Esophagus muscularis mucosa (tissue), 4 donors: ENCODE measurements at regions of chr10 and their contacts with region 1.

Region 1: GRCh38 chr10:109922976-109923921 is at the start of gene XPNPEP1:
- DNase-seq: no peak
- H3K4me3 ChIP-seq: peak within 1 kb of the TSS; percentile 93 to 98 (median 95)
- H3K27ac ChIP-seq: peak within 1 kb of the TSS; percentile 95 to 97 (median 96)
- H3K4me1 ChIP-seq: peaks cover 12 to 34% (median 28%) of the 10 kb centered on the region in 4 donors
- H3K27me3 ChIP-seq: no peaks in the 10 kb centered on the region
- CTCF ChIP-seq: no peak
- EP300 ChIP-seq: no peak
- POLR2A ChIP-seq: peak; percentile 61
- total RNA-seq, gene XPNPEP1: 43.2 to 61.9 (median 48.8) TPM

Region 2: DNA sequence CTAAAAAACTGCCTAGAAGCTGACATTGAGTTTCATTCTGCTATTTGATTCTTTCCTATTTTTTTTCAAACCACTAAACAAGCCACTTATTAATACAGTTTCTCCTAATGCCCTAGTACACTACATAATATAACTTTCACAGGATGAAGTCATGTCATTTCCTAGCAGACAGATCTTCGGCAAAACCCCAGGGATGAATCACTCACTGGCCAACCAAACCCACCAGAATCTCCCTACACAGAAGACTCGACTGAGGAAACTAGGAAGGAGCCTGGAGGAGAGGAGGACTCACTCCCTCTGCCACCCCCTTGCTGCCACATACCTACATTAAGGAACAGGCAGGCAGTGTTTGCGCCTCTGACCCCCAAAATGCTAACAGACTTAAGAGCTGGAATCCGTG is 33.4 kb before region 1 on chr10:
- intact Hi-C with region 1: loop called (anchors 5 kb)
- DNase-seq: no peak
- H3K4me3 ChIP-seq: no peak overlapping the region
- H3K27ac ChIP-seq: peak overlapping the region in 1 of 4 donors; percentile 29
- H3K4me1 ChIP-seq: peaks cover 37 to 50% (median 46%) of the 10 kb centered on the region in 4 donors
- H3K27me3 ChIP-seq: no peaks in the 10 kb centered on the region
- CTCF ChIP-seq: no peak
- EP300 ChIP-seq: no peak
- POLR2A ChIP-seq: no peak

Region 3: DNA sequence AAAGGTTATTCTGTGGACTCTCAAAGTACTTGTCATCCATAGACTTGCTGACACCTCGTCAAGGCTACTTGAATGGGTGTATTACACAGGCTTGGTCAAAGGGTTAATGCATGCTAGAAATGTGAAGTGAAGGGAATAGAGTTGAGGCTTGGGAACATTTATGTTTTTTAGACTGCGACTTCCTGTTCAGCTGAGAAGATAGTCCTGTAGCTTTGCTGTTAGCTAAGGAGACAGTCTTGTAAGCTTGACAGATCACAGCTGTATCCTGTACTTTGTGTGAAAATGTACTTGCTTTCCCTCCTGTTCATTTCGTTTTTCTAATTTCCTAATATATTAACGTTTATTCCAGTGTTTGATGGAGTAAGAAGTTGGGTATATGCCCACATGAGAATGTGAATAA is 136.7 kb after region 1 on chr10:
- intact Hi-C with region 1: no loop called
- DNase-seq: no peak
- H3K4me3 ChIP-seq: no peak overlapping the region
- H3K27ac ChIP-seq: peak overlapping the region in 1 of 4 donors; percentile 40
- H3K4me1 ChIP-seq: peaks cover 11 to 31% (median 30%) of the 10 kb centered on the region in 4 donors
- H3K27me3 ChIP-seq: no peaks in the 10 kb centered on the region
- CTCF ChIP-seq: no peak
- EP300 ChIP-seq: no peak
- POLR2A ChIP-seq: no peak

Region 4: DNA sequence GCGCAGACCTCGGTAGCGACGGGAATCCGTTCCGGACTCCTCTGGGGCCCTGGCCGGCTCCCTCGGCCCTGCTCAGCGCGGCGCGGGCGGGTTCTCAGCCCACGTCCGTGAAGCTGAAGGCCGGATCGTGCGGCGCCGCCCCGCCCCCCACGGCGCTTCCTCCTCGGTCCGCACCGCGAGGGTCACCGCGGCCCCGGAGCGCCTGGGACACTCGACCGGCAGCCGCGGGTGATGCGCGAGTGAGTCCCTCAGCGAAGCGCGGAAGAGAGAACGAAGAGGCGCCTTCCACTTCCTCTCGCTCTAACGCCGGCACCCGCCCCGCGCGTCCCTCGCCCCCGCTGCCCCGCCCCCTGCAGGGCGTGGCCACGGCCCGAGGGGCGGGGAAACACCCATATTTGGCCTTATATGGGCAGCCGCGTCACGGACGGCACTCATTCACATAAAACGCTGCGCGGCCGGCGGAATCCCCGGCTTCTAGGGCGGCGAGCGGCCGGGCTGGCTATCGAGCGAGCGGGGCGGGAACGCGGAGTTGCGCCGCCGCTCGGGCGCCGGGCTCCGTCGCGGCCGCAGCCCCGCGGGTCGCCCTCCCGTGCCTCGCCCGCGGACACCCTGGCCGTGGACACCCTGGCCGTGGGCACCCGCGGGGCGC is 574.3 kb after region 1 on chr10 and contains the start of gene DUSP5:
- intact Hi-C with region 1: no loop called
- DNase-seq: peak; percentile 99
- H3K4me3 ChIP-seq: peak within 1 kb of the TSS; percentile 68 to 83 (median 78)
- H3K27ac ChIP-seq: peak within 1 kb of the TSS; percentile 88 to 93 (median 92)
- H3K4me1 ChIP-seq: peaks cover 49 to 62% (median 60%) of the 10 kb centered on the region in 4 donors
- H3K27me3 ChIP-seq: no peaks in the 10 kb centered on the region
- CTCF ChIP-seq: no peak
- EP300 ChIP-seq: no peak
- POLR2A ChIP-seq: peak; percentile 80
- total RNA-seq, gene DUSP5: 3.8 to 25.7 (median 4.6) TPM